T-cell (primary cell): ENCODE measurements at regions of chr2 and their contacts with region 1.

Region 1: GRCh38 chr2:177520356-177520723 is 127.8 kb downstream of the AGPS start:
- DNase-seq: no peak
- ATAC-seq: no peak
- H3K4me3 ChIP-seq: no peak overlapping the region
- H3K4me3 Mint-ChIP-seq: no peak overlapping the region
- H3K27ac ChIP-seq: no peak overlapping the region
- H3K27ac Mint-ChIP-seq: no peak overlapping the region
- H3K4me1 ChIP-seq: no peaks in the 10 kb centered on the region
- H3K4me1 Mint-ChIP-seq: no peaks in the 10 kb centered on the region
- H3K27me3 ChIP-seq: no peaks in the 10 kb centered on the region
- H3K27me3 Mint-ChIP-seq: no peaks in the 10 kb centered on the region

Region 2: GRCh38 chr2:177296040-177296439 is 224.3 kb before region 1 on chr2:
- CTCF ChIA-PET with region 1: interaction called in 1 of 2 experiments, 16 read pairs
- POLR2A ChIA-PET with region 1: no interaction called
- DNase-seq: peak in 1 of 35 experiments; percentile 64
- ATAC-seq: peak; percentile 50 to 59 (median 58)
- H3K4me3 ChIP-seq: no peak overlapping the region
- H3K4me3 Mint-ChIP-seq: no peak overlapping the region
- H3K27ac ChIP-seq: no peak overlapping the region
- H3K27ac Mint-ChIP-seq: no peak overlapping the region
- H3K4me1 ChIP-seq: peaks cover 0 to 6% of the 10 kb centered on the region in 2 experiments
- H3K4me1 Mint-ChIP-seq: peaks cover 13 to 18% (median 15%) of the 10 kb centered on the region in 3 donors
- H3K27me3 ChIP-seq: no peaks in the 10 kb centered on the region
- H3K27me3 Mint-ChIP-seq: no peaks in the 10 kb centered on the region